ENCODE measurements at regions of chr11 and their contacts with region 1.

Region 1: GRCh38 chr11:68962527-68963250 is 18.1 kb downstream of the MRGPRD start:
- DNase-seq: peak; percentile 58
- H3K4me3 Mint-ChIP-seq: peak overlapping the region; percentile 66
- H3K27ac Mint-ChIP-seq: peak overlapping the region; percentile 84
- H3K4me1 Mint-ChIP-seq: peaks cover 37% of the 10 kb centered on the region
- H3K27me3 Mint-ChIP-seq: no peaks in the 10 kb centered on the region

Region 2: GRCh38 chr11:68942751-68943271 is 19.9 kb before region 1 on chr11:
- CTCF ChIA-PET with region 1: no interaction called
- POLR2A ChIA-PET with region 1: no interaction called
- intact Hi-C with region 1: no loop called
- DNase-seq: no peak
- H3K4me3 Mint-ChIP-seq: no peak overlapping the region
- H3K27ac Mint-ChIP-seq: no peak overlapping the region
- H3K4me1 Mint-ChIP-seq: no peaks in the 10 kb centered on the region
- H3K27me3 Mint-ChIP-seq: no peaks in the 10 kb centered on the region

Region 3: DNA sequence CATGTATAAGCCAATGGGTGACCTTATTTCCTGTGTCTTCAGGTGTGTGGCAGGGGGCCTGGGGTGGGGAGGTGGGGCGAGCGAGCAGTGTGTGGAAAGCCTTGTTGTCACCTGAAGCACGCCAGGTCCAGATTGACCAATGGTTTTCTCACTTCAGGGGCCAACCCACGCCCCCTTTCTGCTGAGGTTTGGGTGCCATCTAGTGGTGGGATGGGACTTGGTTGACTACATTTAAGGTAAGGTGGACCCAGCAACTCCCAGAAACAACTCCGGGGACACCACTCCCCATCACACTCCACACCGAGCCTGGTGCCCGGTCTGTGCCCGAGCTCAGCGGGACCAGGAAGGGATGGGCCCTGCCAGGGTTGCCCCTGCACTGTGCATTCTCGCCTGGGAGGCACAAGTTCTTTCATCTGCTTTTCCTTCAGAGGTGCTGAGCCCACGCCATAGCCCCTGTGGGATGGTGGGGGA is 126.0 kb after region 1 on chr11:
- CTCF ChIA-PET with region 1: no interaction called
- POLR2A ChIA-PET with region 1: no interaction called
- intact Hi-C with region 1: loop called (anchors 10 kb)
- DNase-seq: peak; percentile 72
- H3K4me3 Mint-ChIP-seq: no peak overlapping the region
- H3K27ac Mint-ChIP-seq: no peak overlapping the region
- H3K4me1 Mint-ChIP-seq: no peaks in the 10 kb centered on the region
- H3K27me3 Mint-ChIP-seq: no peaks in the 10 kb centered on the region